HAP-1 (cell line): ENCODE measurements at regions of chr15 and their contacts with region 1.

Region 1: DNA sequence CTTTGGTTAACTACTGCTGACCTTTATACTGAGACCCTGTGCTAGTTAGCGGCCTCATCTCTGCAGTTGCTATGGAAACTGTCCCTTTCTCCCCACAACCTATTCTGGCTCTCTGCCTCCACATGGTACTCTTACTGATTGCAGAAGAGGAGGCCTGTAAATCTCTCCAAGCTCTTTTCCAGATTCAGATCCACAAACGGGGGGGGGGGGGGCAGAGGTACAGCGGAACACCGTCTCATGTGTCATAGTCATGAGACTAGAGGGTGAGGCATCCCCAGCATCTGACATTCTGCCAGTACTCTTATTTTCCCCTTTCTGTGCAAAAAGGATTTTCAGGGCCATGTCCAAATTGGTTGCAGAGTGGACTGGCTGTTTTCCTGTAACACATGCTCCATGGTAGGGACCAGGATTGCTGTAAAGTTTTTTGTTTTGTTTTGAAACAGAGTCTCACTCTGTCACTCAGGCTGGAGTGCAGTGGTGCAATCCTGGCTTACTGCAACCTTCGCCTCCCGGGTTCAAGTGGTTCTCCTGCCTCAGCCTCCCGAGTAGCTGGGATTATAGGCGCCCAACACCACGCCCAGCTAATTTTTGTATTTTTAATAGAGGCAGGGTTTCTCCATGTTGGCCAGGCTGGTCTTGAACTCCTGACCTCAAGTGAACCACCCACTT is 8.3 kb upstream of the MAP1A start:
- DNase-seq: no peak
- H3K4me3 ChIP-seq: no peak overlapping the region; the same call in 1 of the 2 replicates
- H3K4me1 ChIP-seq: peaks cover 12% of the 10 kb centered on the region
- H3K27me3 ChIP-seq: no peaks in the 10 kb centered on the region

Region 2: GRCh38 chr15:43440721-43441281 is 68.3 kb before region 1 on chr15:
- in situ Hi-C with region 1: loop called (anchors 10 kb)
- DNase-seq: peak; percentile 66 to 84
- H3K4me3 ChIP-seq: no peak overlapping the region
- H3K4me1 ChIP-seq: peaks cover 12% of the 10 kb centered on the region
- H3K27me3 ChIP-seq: no peaks in the 10 kb centered on the region